ENCODE measurements at regions of chrX and their contacts with region 1.

Region 1: GRCh38 chrX:79412972-79413371 is 45.8 kb upstream of the ITM2A start:
- DNase-seq: peak in 3 of 35 experiments; percentile 3 to 61 (median 4)
- ATAC-seq: no peak
- H3K4me3 ChIP-seq: peak overlapping the region in 1 of 2 donors; percentile 38
- H3K4me3 Mint-ChIP-seq: peak overlapping the region; percentile 66 to 78 (median 73)
- H3K27ac ChIP-seq: peak overlapping the region; percentile 57
- H3K27ac Mint-ChIP-seq: peak overlapping the region; percentile 75 to 82
- H3K4me1 ChIP-seq: peaks cover 2 to 16% of the 10 kb centered on the region in 2 experiments
- H3K4me1 Mint-ChIP-seq: peaks cover 20 to 37% (median 32%) of the 10 kb centered on the region in 3 donors
- H3K27me3 ChIP-seq: no peaks in the 10 kb centered on the region
- H3K27me3 Mint-ChIP-seq: no peaks in the 10 kb centered on the region

Region 2: GRCh38 chrX:78555401-78555980 is 857.5 kb before region 1 on chrX:
- CTCF ChIA-PET with region 1: interaction called, 3 to 13 read pairs
- POLR2A ChIA-PET with region 1: interaction called in 1 of 2 experiments, 24 read pairs
- DNase-seq: peak in 1 of 35 experiments; percentile 54
- ATAC-seq: no peak
- H3K4me3 ChIP-seq: no peak overlapping the region
- H3K4me3 Mint-ChIP-seq: peak overlapping the region in 1 of 3 donors; percentile 17
- H3K27ac ChIP-seq: no peak overlapping the region
- H3K27ac Mint-ChIP-seq: peak overlapping the region; percentile 28 to 78
- H3K4me1 ChIP-seq: peaks cover 0 to 4% of the 10 kb centered on the region in 2 experiments
- H3K4me1 Mint-ChIP-seq: peaks cover 2 to 6% (median 4%) of the 10 kb centered on the region in 3 donors
- H3K27me3 ChIP-seq: no peaks in the 10 kb centered on the region
- H3K27me3 Mint-ChIP-seq: no peaks in the 10 kb centered on the region

Region 3: GRCh38 chrX:79169484-79169883 is 243.5 kb before region 1 on chrX:
- CTCF ChIA-PET with region 1: interaction called, 3 to 4 read pairs
- POLR2A ChIA-PET with region 1: interaction called in 1 of 2 experiments, 22 read pairs
- DNase-seq: no peak
- ATAC-seq: no peak
- H3K4me3 ChIP-seq: no peak overlapping the region
- H3K4me3 Mint-ChIP-seq: peak overlapping the region in 2 of 3 donors; percentile 21 to 50
- H3K27ac ChIP-seq: peak overlapping the region; percentile 91
- H3K27ac Mint-ChIP-seq: peak overlapping the region; percentile 89 to 90
- H3K4me1 ChIP-seq: peaks cover 26 to 31% of the 10 kb centered on the region in 2 experiments
- H3K4me1 Mint-ChIP-seq: peaks cover 79 to 94% (median 90%) of the 10 kb centered on the region in 3 donors
- H3K27me3 ChIP-seq: no peaks in the 10 kb centered on the region
- H3K27me3 Mint-ChIP-seq: peaks cover 0 to 3% of the 10 kb centered on the region in 2 donors

Region 4: DNA sequence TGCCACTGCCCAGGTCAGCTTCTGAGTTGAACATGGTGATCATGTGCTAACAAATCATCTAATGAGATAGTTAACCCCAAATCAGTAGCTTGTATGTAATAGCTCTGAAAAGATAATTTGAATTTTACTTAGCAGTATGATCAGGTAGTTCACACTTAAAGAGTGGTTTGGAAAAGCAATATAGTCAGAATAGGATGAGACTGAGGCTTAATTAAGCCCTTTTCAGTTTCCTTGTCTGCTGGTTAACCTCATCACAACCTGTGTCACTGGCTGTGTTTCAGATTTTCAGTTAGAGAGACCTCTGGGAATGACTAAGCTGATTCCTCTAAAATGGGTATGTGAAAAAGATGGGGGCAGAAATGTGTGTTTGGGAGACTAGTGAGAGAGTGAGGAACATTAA is 230.4 kb before region 1 on chrX:
- CTCF ChIA-PET with region 1: no interaction called
- POLR2A ChIA-PET with region 1: no interaction called
- DNase-seq: no peak
- ATAC-seq: peak in 2 of 4 experiments; percentile 33 to 43
- H3K4me3 ChIP-seq: no peak overlapping the region
- H3K4me3 Mint-ChIP-seq: peak overlapping the region in 2 of 3 donors; percentile 8 to 37
- H3K27ac ChIP-seq: peak overlapping the region; percentile 60
- H3K27ac Mint-ChIP-seq: peak overlapping the region; percentile 75 to 80
- H3K4me1 ChIP-seq: peaks cover 3 to 13% of the 10 kb centered on the region in 2 experiments
- H3K4me1 Mint-ChIP-seq: peaks cover 28 to 68% (median 48%) of the 10 kb centered on the region in 3 donors
- H3K27me3 ChIP-seq: no peaks in the 10 kb centered on the region
- H3K27me3 Mint-ChIP-seq: peaks cover 0 to 4% of the 10 kb centered on the region in 2 donors

Measured in T-cell (primary cell).